ENCODE measurements at regions of chr17 and their contacts with region 1.

Region 1: DNA sequence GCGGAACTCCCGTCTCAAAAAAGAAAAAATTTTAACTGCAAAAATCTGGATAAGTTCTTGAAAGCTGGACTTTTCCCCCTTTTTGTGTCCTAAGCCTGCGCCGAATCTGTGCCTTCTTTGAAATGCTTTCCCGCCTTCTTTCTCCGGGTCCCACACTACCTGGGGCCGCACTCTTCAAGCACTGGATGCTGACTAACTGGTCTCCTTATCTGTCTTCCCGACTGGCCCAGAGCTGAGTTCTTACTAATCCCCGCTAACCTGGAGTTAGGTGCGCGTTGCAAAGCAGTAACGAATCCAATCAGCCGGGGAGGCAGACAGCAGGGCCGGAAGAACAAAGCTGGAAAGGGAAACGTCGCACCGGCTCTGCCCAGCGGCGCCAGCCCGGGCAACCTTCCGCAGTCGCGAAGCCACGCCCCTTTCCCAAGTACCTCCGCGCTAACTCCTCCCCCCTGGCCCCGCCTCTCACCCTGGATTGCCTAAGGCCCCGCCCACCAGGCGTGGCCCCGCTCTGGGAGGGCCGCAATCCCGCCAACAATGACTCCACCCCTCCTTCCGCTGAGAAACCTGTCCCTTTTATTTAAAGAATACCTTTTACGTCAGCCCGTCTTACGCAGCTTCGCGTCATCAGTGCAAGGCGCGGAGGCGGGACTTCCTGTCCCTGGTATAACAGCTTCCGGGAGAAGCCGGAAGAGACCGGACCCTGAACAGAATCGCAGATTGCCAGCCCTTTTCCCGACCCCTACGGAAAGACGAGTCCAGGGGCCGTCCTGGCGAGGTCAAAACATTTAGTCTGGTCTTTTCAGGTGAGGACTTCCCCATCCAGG is at the start of gene TMUB2:
- DNase-seq: peak; percentile 100
- ATAC-seq: peak; percentile 93
- H3K4me3 Mint-ChIP-seq: peak within 1 kb of the TSS; percentile 100
- H3K27ac Mint-ChIP-seq: peak within 1 kb of the TSS; percentile 99
- H3K4me1 Mint-ChIP-seq: peaks cover 18% of the 10 kb centered on the region
- H3K27me3 Mint-ChIP-seq: no peaks in the 10 kb centered on the region
- CTCF ChIP-seq: no peak
- total RNA-seq, gene TMUB2: 21.9 to 26.9 TPM (median 25.3 TPM) in 3 replicates

Region 2: GRCh38 chr17:44149750-44150329 is 36.7 kb before region 1 on chr17:
- CTCF ChIA-PET with region 1: interaction called, 14 read pairs
- POLR2A ChIA-PET with region 1: no interaction called
- DNase-seq: no peak
- ATAC-seq: no peak
- H3K4me3 Mint-ChIP-seq: no peak overlapping the region
- H3K27ac Mint-ChIP-seq: peak overlapping the region; percentile 19; the same call in 1 of the 2 replicates
- H3K4me1 Mint-ChIP-seq: no peaks in the 10 kb centered on the region
- H3K27me3 Mint-ChIP-seq: no peaks in the 10 kb centered on the region
- CTCF ChIP-seq: no peak

Region 3: GRCh38 chr17:44314869-44315661 is 128.5 kb after region 1 on chr17:
- CTCF ChIA-PET with region 1: no interaction called
- POLR2A ChIA-PET with region 1: interaction called, 11 read pairs
- DNase-seq: peak; percentile 76
- ATAC-seq: peak; percentile 13
- H3K4me3 Mint-ChIP-seq: peak overlapping the region; percentile 79
- H3K27ac Mint-ChIP-seq: no peak overlapping the region
- H3K4me1 Mint-ChIP-seq: peaks cover 39% of the 10 kb centered on the region
- H3K27me3 Mint-ChIP-seq: peaks cover 37% of the 10 kb centered on the region
- CTCF ChIP-seq: no peak

Measured in WTC11 (cell line).